ENCODE measurements at regions of chr6 and their contacts with region 1.

Region 1: DNA sequence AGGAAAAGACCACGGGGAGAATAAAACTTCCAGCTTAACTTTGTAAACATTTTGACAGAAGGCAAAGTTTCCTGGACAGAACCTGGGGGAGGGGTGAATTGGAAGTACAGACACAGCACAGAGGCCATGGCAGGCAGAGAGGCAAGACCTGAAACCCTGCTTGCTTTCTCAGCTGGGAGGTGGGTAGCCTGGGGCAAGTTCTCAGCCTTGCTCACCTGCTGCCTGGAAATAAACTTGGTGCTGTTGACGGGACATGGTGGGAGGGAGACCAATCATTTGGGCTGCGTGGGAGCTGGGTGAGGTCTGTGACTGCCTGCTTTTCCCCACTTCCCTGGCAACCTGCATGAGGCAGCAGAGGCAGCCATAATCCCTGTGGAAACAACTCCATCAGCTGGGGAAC is 221.3 kb downstream of the MOXD1 start:
- DNase-seq: no peak
- ATAC-seq: no peak
- H3K4me3 ChIP-seq: no peak overlapping the region
- H3K4me3 Mint-ChIP-seq: no peak overlapping the region
- H3K27ac ChIP-seq: no peak overlapping the region
- H3K27ac Mint-ChIP-seq: no peak overlapping the region
- H3K4me1 ChIP-seq: no peaks in the 10 kb centered on the region
- H3K4me1 Mint-ChIP-seq: no peaks in the 10 kb centered on the region
- H3K27me3 ChIP-seq: peaks cover 0 to 8% of the 10 kb centered on the region in 2 experiments
- H3K27me3 Mint-ChIP-seq: peaks cover 0 to 12% of the 10 kb centered on the region in 2 donors

Region 2: GRCh38 chr6:132115714-132116366 is 64.1 kb before region 1 on chr6:
- CTCF ChIA-PET with region 1: no interaction called
- POLR2A ChIA-PET with region 1: no interaction called
- DNase-seq: no peak
- ATAC-seq: no peak
- H3K4me3 ChIP-seq: no peak overlapping the region
- H3K4me3 Mint-ChIP-seq: no peak overlapping the region
- H3K27ac ChIP-seq: no peak overlapping the region
- H3K27ac Mint-ChIP-seq: no peak overlapping the region
- H3K4me1 ChIP-seq: no peaks in the 10 kb centered on the region
- H3K4me1 Mint-ChIP-seq: no peaks in the 10 kb centered on the region
- H3K27me3 ChIP-seq: no peaks in the 10 kb centered on the region
- H3K27me3 Mint-ChIP-seq: no peaks in the 10 kb centered on the region

Region 3: DNA sequence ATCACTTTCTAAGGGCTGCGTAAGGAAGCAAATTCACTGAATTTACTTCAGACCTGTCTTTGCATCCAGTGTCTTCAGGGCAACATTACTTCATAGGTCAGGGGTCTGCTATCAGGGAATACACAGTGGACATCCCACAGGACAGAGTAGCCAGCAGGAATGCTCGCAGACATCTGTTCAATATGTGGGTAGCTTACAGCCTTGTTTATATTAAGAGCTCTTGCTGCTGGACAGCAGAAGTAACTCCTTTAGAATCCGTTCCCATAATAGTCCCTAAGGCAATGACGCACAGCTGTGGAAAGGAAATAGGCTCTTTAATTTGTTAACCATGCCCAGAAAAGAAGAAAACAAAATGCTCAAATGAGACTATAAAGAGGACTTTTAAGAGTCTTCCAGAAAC is 22.6 kb after region 1 on chr6:
- CTCF ChIA-PET with region 1: no interaction called
- POLR2A ChIA-PET with region 1: interaction called in 1 of 2 experiments, 15 read pairs
- DNase-seq: no peak
- ATAC-seq: no peak
- H3K4me3 ChIP-seq: no peak overlapping the region
- H3K4me3 Mint-ChIP-seq: no peak overlapping the region
- H3K27ac ChIP-seq: no peak overlapping the region
- H3K27ac Mint-ChIP-seq: no peak overlapping the region
- H3K4me1 ChIP-seq: no peaks in the 10 kb centered on the region
- H3K4me1 Mint-ChIP-seq: no peaks in the 10 kb centered on the region
- H3K27me3 ChIP-seq: no peaks in the 10 kb centered on the region
- H3K27me3 Mint-ChIP-seq: peaks cover 0 to 2% of the 10 kb centered on the region in 2 donors

Measured in T-cell (primary cell).